A673 (cell line): ENCODE measurements at regions of chr20 and their contacts with region 1.

Region 1: GRCh38 chr20:23668477-23668951 is 20.3 kb downstream of the CST4 start:
- DNase-seq: peak; percentile 66
- H3K4me3 ChIP-seq: no peak overlapping the region
- H3K27ac ChIP-seq: no peak overlapping the region
- H3K4me1 ChIP-seq: no peaks in the 10 kb centered on the region
- H3K27me3 ChIP-seq: no peaks in the 10 kb centered on the region
- CTCF ChIP-seq: peak; percentile 84

Region 2: GRCh38 chr20:23441850-23442313 is 226.6 kb before region 1 on chr20:
- CTCF ChIA-PET with region 1: interaction called, 7 read pairs
- POLR2A ChIA-PET with region 1: no interaction called
- intact Hi-C with region 1: loop called (anchors 2 kb)
- DNase-seq: peak; percentile 80
- H3K4me3 ChIP-seq: no peak overlapping the region
- H3K27ac ChIP-seq: no peak overlapping the region
- H3K4me1 ChIP-seq: no peaks in the 10 kb centered on the region
- H3K27me3 ChIP-seq: no peaks in the 10 kb centered on the region
- CTCF ChIP-seq: peak; percentile 92

Region 3: GRCh38 chr20:23832775-23833508 is 164.4 kb after region 1 on chr20:
- CTCF ChIA-PET with region 1: no interaction called
- POLR2A ChIA-PET with region 1: no interaction called
- intact Hi-C with region 1: no loop called
- DNase-seq: no peak
- H3K4me3 ChIP-seq: no peak overlapping the region
- H3K27ac ChIP-seq: no peak overlapping the region
- H3K4me1 ChIP-seq: no peaks in the 10 kb centered on the region
- H3K27me3 ChIP-seq: no peaks in the 10 kb centered on the region
- CTCF ChIP-seq: no peak

Region 4: GRCh38 chr20:23889775-23890211 is 221.3 kb after region 1 on chr20:
- CTCF ChIA-PET with region 1: no interaction called
- POLR2A ChIA-PET with region 1: no interaction called
- intact Hi-C with region 1: loop called (anchors 2 kb)
- DNase-seq: peak; percentile 73
- H3K4me3 ChIP-seq: no peak overlapping the region
- H3K27ac ChIP-seq: no peak overlapping the region
- H3K4me1 ChIP-seq: no peaks in the 10 kb centered on the region
- H3K27me3 ChIP-seq: peaks cover 3% of the 10 kb centered on the region
- CTCF ChIP-seq: peak; percentile 82

Region 5: DNA sequence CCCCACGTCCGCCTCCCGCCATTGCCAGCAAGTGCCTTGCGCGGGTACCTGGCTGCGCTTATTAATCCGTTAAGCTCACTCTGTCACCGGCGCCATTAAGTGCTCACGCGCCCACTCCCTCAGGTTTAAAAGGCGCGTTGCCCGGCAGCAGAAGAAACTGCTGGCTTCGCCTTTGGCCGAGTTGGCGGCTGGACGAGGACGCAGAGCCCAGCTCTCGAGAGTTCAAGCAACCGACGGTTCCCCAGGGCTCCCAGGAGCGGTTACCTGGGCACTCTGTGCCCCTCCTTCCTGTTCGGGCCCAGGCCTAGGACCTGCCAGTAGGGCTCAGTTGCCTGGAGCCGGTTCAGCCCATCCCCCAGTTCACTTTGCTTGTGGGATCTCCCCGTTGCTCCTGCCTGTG is 320.0 kb after region 1 on chr20 and contains the start of gene GGTLC1:
- CTCF ChIA-PET with region 1: no interaction called
- POLR2A ChIA-PET with region 1: no interaction called
- intact Hi-C with region 1: loop called (anchors 10 kb)
- DNase-seq: no peak
- H3K4me3 ChIP-seq: no peak within 1 kb of the TSS
- H3K27ac ChIP-seq: no peak within 1 kb of the TSS
- H3K4me1 ChIP-seq: no peaks in the 10 kb centered on the region
- H3K27me3 ChIP-seq: no peaks in the 10 kb centered on the region
- CTCF ChIP-seq: no peak
- total RNA-seq, gene GGTLC1: not detected in 2 replicates